ENCODE measurements at regions of chr3 and their contacts with region 1.

Region 1: DNA sequence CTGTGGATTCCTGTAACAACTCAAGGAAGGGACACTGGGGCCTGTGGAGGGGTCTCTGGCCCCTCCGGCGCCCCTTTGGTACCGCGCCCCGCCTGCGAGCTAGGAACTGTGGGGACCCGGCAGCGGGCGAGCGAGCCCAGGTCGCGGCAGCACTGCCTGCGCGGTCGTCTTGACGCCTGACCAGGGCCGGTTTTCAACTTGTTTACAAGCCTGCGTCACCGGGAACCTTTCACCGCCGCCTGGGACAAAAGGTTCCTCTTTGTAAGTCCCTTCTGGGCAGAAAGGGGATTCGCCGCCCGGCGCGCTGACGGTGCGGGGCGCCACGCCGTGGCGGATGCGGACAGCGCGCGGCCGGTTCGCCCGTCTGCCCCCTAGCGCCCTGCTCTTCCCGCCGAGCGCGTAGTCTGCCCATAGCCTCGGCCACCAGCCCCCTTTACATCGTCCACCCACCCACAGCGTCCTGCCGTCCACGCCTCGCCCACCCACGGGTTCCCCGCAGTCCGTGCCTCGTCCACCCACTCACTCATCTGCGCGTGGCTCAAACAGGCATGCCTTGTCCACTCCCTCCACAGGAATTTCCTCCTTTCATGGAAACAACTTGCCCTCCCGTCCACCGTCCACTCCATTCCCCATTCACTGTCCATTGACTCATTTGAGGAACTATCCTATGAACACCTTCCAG is 5.5 kb upstream of the CFAP100 start:
- DNase-seq: peak; percentile 82
- H3K4me3 Mint-ChIP-seq: peak overlapping the region; percentile 64
- H3K27ac Mint-ChIP-seq: peak overlapping the region; percentile 71
- H3K4me1 Mint-ChIP-seq: peaks cover 7% of the 10 kb centered on the region
- H3K27me3 Mint-ChIP-seq: peaks cover 7% of the 10 kb centered on the region
- CTCF ChIP-seq: peak; percentile 98

Region 2: GRCh38 chr3:125916376-125916978 is 472.8 kb before region 1 on chr3:
- CTCF ChIA-PET with region 1: interaction called, 5 read pairs
- POLR2A ChIA-PET with region 1: no interaction called
- intact Hi-C with region 1: loop called (anchors 10 kb)
- DNase-seq: peak; percentile 90
- H3K4me3 Mint-ChIP-seq: peak overlapping the region; percentile 86
- H3K27ac Mint-ChIP-seq: peak overlapping the region; percentile 80
- H3K4me1 Mint-ChIP-seq: peaks cover 14% of the 10 kb centered on the region
- H3K27me3 Mint-ChIP-seq: no peaks in the 10 kb centered on the region
- CTCF ChIP-seq: no peak

Region 3: GRCh38 chr3:126129181-126129891 is 259.9 kb before region 1 on chr3:
- CTCF ChIA-PET with region 1: interaction called, 88 read pairs
- POLR2A ChIA-PET with region 1: no interaction called
- intact Hi-C with region 1: loop called (anchors 1 kb)
- DNase-seq: peak; percentile 95
- H3K4me3 Mint-ChIP-seq: peak overlapping the region; percentile 28
- H3K27ac Mint-ChIP-seq: no peak overlapping the region
- H3K4me1 Mint-ChIP-seq: peaks cover 11% of the 10 kb centered on the region
- H3K27me3 Mint-ChIP-seq: peaks cover 22% of the 10 kb centered on the region
- CTCF ChIP-seq: no peak

Region 4: GRCh38 chr3:126197854-126198584 is 191.2 kb before region 1 on chr3:
- CTCF ChIA-PET with region 1: interaction called, 5 read pairs
- POLR2A ChIA-PET with region 1: interaction called, 3 read pairs
- intact Hi-C with region 1: loop called (anchors 1 kb)
- DNase-seq: peak; percentile 68
- H3K4me3 Mint-ChIP-seq: no peak overlapping the region
- H3K27ac Mint-ChIP-seq: no peak overlapping the region
- H3K4me1 Mint-ChIP-seq: no peaks in the 10 kb centered on the region
- H3K27me3 Mint-ChIP-seq: no peaks in the 10 kb centered on the region
- CTCF ChIP-seq: peak; percentile 54

Region 5: DNA sequence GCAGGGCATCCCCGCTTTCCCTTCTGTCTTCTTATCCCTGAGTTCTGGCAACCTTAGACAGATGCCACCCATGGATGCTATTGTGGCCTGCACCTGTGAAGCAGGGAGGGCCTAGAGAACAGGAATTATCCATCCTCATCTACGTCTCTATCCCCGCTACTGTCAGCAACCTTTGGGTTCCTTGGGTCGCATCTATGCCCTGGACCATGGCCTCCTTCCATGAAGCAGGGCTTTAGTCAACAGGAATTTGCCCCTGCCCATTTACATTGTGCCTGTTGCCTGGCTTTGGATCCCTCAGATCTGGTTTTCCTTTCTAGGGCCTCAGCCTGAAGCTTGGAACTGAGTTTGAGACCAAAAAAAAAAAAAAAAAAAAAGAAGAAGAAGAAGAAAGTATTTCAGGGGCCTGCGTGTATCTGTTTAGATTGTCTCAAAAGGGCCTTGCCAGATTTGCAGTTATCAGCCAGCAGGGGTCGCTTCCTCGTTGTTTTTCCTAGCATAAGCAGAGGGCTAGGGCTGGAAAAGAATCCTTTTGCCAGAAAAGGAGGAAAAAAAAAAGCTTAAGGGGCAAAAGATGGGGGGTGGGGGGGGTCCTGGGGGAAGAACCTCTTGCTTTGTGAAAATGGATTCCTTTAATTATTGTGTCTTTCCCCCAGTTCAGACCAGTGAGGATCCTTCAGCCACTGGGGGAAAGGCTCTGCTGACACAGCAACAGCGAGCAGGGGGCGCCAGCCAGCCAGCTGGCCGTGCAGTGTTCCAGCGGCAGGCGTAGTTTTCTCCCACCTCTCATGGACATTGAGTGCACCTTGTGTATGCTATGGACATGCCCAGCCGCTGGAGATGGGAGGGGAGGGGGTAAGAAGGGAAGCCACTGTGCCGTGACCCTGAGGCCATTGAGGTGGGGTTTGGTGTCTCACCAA is 143.2 kb before region 1 on chr3:
- CTCF ChIA-PET with region 1: interaction called, 37 read pairs
- POLR2A ChIA-PET with region 1: no interaction called
- intact Hi-C with region 1: loop called (anchors 1 kb)
- DNase-seq: peak; percentile 62
- H3K4me3 Mint-ChIP-seq: no peak overlapping the region
- H3K27ac Mint-ChIP-seq: no peak overlapping the region
- H3K4me1 Mint-ChIP-seq: no peaks in the 10 kb centered on the region
- H3K27me3 Mint-ChIP-seq: no peaks in the 10 kb centered on the region
- CTCF ChIP-seq: peak; percentile 43

Region 6: GRCh38 chr3:126378341-126378751 is 10.9 kb before region 1 on chr3:
- CTCF ChIA-PET with region 1: interaction called, 16 read pairs
- POLR2A ChIA-PET with region 1: no interaction called
- intact Hi-C with region 1: no loop called
- DNase-seq: no peak
- H3K4me3 Mint-ChIP-seq: no peak overlapping the region
- H3K27ac Mint-ChIP-seq: no peak overlapping the region
- H3K4me1 Mint-ChIP-seq: no peaks in the 10 kb centered on the region
- H3K27me3 Mint-ChIP-seq: no peaks in the 10 kb centered on the region
- CTCF ChIP-seq: no peak

Region 7: GRCh38 chr3:126417471-126418255 is 28.4 kb after region 1 on chr3:
- CTCF ChIA-PET with region 1: no interaction called
- POLR2A ChIA-PET with region 1: no interaction called
- intact Hi-C with region 1: no loop called
- DNase-seq: no peak
- H3K4me3 Mint-ChIP-seq: no peak overlapping the region
- H3K27ac Mint-ChIP-seq: no peak overlapping the region
- H3K4me1 Mint-ChIP-seq: peaks cover 7% of the 10 kb centered on the region
- H3K27me3 Mint-ChIP-seq: no peaks in the 10 kb centered on the region
- CTCF ChIP-seq: no peak

Region 8: GRCh38 chr3:126551121-126552071 is 162.1 kb after region 1 on chr3:
- CTCF ChIA-PET with region 1: no interaction called
- POLR2A ChIA-PET with region 1: no interaction called
- intact Hi-C with region 1: no loop called
- DNase-seq: no peak
- H3K4me3 Mint-ChIP-seq: no peak overlapping the region
- H3K27ac Mint-ChIP-seq: no peak overlapping the region
- H3K4me1 Mint-ChIP-seq: no peaks in the 10 kb centered on the region
- H3K27me3 Mint-ChIP-seq: peaks cover 48% of the 10 kb centered on the region
- CTCF ChIP-seq: no peak

Measured in MCF 10A (cell line).